Breast epithelium (tissue), 4 donors: ENCODE measurements at regions of chr7 and their contacts with region 1.

Region 1: GRCh38 chr7:54978364-54979118 is 40.3 kb upstream of the EGFR start:
- DNase-seq: no peak
- H3K4me3 ChIP-seq: no peak overlapping the region
- H3K27ac ChIP-seq: no peak overlapping the region
- H3K4me1 ChIP-seq: no peaks in the 10 kb centered on the region
- H3K27me3 ChIP-seq: no peaks in the 10 kb centered on the region
- CTCF ChIP-seq: no peak
- POLR2A ChIP-seq: no peak

Region 2: DNA sequence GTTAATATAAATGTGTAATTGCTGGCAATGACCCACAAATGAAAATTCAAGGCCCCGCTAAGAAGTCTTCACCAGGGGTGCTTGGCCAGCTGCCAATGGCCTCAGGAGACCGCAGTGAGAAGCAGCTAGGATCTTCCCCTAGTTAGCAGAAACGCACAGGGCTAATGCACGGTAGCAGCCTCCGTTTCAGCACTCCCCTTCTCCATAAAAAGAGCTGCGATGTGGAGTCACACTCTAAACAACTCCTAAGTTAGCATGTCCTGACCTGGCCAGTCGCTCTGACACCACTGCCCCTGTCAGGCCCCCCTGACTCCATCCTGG is 745.0 kb after region 1 on chr7:
- intact Hi-C with region 1: loop called (anchors 10 kb)
- DNase-seq: no peak
- H3K4me3 ChIP-seq: no peak overlapping the region
- H3K27ac ChIP-seq: no peak overlapping the region
- H3K4me1 ChIP-seq: no peaks in the 10 kb centered on the region
- H3K27me3 ChIP-seq: no peaks in the 10 kb centered on the region
- CTCF ChIP-seq: no peak
- POLR2A ChIP-seq: no peak